Right ventricle myocardium inferior (tissue), 1 donor: ENCODE measurements at regions of chr10 and their contacts with region 1.

Region 1: DNA sequence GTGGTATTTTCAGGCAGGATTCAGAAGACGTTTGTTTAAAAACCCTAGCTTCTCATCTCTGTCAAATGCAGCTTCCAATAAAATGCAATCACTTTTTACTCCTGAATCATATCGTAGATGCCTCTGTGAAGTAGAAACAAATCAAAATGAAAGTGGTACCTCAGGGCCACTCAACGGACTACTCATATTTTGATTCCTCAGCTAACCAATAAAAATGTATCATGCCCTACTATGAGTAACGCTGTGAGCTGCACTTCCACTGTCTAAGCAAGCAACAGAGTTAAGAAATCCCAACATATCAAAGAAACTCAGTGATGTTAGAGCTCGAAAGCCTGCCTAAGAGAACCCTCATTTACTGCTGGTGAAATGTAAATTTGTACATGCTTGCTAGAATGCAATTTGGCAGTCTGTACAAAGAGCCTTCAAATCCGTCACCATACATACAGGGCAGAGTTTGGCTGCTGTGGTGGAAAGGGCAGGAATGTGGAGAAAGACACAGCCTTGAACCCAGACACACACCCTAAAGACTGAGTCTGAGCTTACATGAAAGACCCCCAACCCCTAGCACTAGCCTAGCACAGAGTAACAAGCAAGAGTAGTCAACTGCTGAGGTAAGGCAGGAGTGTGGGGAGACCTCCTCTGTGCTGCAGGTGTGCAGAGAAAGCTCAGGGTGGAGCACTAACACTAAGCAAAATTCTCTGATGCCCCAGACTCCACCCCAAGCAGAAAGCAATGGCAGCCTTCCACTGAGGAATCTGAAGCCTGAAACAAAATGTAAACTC is 151.5 kb downstream of the ANK3 start:
- DNase-seq: no peak
- ATAC-seq: peak; percentile 69

Region 2: DNA sequence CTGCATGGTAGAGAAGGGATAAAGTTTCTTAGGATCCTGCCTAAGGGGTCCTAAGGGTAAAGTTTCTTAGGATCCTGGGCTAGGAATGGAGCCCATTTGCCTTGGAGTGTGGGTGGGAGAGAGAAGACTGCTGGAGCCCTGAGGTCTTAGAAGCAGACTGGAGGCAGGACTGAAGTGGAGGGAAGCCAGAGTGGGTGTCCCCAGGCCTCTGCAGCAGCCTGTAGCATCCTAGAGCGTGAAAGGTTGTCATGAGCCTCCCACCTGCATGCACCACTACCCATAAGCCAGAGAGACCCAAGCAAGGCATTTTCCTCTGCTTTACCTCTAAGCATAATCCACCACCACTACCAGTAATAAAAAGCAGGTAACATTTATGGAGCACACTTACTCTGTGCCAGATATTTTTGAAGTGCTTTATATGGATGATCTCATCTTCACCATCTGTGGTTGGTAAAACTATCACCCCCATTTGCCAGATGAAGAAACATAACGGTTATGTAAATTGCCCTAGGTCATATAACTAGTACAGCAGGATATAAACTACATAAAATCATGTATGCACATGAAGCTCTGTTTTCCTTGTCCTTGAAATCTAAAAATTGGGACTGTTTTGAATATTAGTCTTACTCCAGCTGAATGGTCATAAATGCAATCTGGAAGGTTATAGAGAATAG is 228.3 kb before region 1 on chr10:
- intact Hi-C with region 1: no loop called
- DNase-seq: no peak
- ATAC-seq: no peak

Region 3: GRCh38 chr10:60299961-60300883 is 62.1 kb after region 1 on chr10:
- intact Hi-C with region 1: loop called (anchors 5 kb)
- DNase-seq: no peak
- ATAC-seq: peak; percentile 89

Region 4: DNA sequence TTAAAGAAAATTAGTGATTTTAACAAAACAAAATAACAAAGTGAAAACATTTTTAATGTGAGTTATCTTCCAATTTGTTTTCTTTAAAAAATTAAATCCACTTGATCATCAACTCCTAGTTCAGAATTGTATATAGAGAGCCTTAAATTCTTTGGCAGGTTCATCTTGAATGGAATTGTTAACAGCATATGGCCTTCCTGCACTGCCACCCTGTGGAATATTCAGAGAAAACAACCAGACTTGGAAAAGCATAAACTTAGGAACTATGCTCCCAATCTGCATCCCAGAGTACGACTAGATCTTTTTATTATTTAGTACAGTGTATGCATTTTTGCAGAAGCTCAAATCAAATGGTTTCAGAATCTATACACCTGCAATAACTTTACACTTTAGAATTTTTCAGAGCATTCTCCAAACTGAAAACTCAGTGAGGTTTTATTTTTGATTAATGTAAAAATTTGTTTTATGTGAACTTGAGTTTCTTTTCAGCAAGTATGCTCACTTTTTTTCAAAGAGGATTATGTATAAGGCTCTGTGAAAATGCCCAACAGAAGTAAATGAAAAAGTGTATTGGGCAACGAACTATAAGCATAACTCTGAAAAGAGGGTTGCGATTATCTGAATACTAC is 196.4 kb after region 1 on chr10:
- intact Hi-C with region 1: loop called (anchors 2 kb)
- DNase-seq: no peak
- ATAC-seq: peak; percentile 64

Region 5: GRCh38 chr10:60646966-60647796 is 409.0 kb after region 1 on chr10:
- intact Hi-C with region 1: loop called (anchors 10 kb)
- DNase-seq: no peak
- ATAC-seq: no peak